ENCODE measurements at regions of chr14 and their contacts with region 1.

Region 1: GRCh38 chr14:20970983-20971704 is 15.9 kb downstream of the RNASE2 start:
- DNase-seq: peak; percentile 86
- ATAC-seq: peak; percentile 94
- H3K4me3 Mint-ChIP-seq: peak overlapping the region; percentile 79
- H3K27ac Mint-ChIP-seq: peak overlapping the region; percentile 48
- H3K4me1 Mint-ChIP-seq: peaks cover 6% of the 10 kb centered on the region
- H3K27me3 Mint-ChIP-seq: peaks cover 28% of the 10 kb centered on the region
- CTCF ChIP-seq: peak; percentile 95

Region 2: DNA sequence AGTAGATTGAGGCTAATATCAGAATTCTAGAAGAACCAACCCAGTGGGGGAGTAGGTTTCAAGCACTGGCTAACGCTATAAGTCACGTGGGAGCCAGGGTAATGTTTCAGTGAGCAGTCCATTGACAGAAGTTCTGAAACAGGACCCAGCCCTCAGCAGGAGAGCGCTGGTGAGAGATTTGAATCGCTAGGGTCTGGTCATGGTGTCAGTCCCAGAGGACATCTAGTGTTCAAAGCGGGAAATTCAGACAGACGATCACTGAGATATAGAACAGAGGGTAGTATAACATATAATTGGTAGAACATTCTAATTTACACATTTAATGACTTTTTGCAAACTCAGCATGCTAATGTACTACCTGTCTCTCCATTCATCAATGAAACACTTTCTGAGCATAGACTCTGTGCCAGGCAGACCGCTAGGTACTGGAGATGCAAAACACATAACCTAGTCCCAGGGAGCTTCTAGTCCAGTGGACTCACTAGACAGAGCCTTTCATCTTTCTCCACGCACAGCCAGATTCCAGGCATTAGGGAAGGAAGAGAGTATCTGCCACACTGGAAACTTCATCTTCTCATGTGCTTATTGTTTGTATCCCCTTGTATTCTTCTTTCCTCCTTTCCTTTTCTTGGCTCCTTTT is 115.4 kb before region 1 on chr14:
- CTCF ChIA-PET with region 1: interaction called, 73 read pairs
- POLR2A ChIA-PET with region 1: no interaction called
- intact Hi-C with region 1: loop called (anchors 1 kb)
- DNase-seq: peak; percentile 50
- ATAC-seq: peak; percentile 87
- H3K4me3 Mint-ChIP-seq: no peak overlapping the region
- H3K27ac Mint-ChIP-seq: no peak overlapping the region
- H3K4me1 Mint-ChIP-seq: no peaks in the 10 kb centered on the region
- H3K27me3 Mint-ChIP-seq: peaks cover 13% of the 10 kb centered on the region
- CTCF ChIP-seq: peak; percentile 68

Region 3: GRCh38 chr14:20934148-20934762 is 36.9 kb before region 1 on chr14:
- CTCF ChIA-PET with region 1: interaction called, 12 read pairs
- POLR2A ChIA-PET with region 1: no interaction called
- intact Hi-C with region 1: no loop called
- DNase-seq: peak; percentile 65
- ATAC-seq: no peak
- H3K4me3 Mint-ChIP-seq: no peak overlapping the region
- H3K27ac Mint-ChIP-seq: no peak overlapping the region
- H3K4me1 Mint-ChIP-seq: no peaks in the 10 kb centered on the region
- H3K27me3 Mint-ChIP-seq: peaks cover 2% of the 10 kb centered on the region
- CTCF ChIP-seq: peak; percentile 76

Region 4: DNA sequence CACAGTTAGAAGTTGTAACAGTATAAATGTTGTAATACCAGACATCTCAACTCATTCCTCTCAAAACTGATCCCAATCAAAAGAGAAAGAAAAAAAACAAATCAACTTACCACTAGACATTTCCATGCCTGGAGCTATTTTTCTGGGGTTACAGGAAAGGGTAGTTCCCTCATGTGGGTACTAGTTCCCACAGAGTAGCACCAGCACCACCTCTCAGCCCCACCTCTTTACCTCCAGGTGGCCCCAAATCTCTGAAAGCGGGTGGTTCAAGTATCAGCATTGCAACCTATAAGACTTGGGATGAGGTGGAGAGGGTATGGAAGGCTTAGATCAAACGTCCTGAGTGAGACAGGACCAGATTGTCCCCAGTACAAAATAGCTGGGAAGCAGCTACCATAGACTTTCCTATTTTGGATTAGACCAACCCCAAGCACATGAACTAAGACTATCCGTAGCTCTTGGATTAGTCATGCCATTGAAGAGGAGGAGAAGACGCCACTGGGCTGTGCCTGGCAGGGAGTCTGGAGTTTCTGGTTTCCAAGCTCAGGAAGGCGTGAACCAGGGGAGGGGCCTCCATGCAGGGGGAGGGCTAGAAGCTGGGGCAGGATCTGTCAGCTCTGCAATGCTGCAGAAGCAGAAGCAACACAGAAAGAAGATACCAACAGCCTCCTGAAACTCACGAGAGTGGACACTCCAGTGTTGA is 27.7 kb after region 1 on chr14 and contains the start of gene SLC39A2:
- CTCF ChIA-PET with region 1: interaction called, 37 read pairs
- POLR2A ChIA-PET with region 1: interaction called, 3 read pairs
- intact Hi-C with region 1: no loop called
- DNase-seq: no peak
- ATAC-seq: no peak
- H3K4me3 Mint-ChIP-seq: no peak within 1 kb of the TSS
- H3K27ac Mint-ChIP-seq: peak within 1 kb of the TSS; percentile 19
- H3K4me1 Mint-ChIP-seq: peaks cover 8% of the 10 kb centered on the region
- H3K27me3 Mint-ChIP-seq: no peaks in the 10 kb centered on the region
- CTCF ChIP-seq: no peak
- total RNA-seq, gene SLC39A2: not detected

Region 5: DNA sequence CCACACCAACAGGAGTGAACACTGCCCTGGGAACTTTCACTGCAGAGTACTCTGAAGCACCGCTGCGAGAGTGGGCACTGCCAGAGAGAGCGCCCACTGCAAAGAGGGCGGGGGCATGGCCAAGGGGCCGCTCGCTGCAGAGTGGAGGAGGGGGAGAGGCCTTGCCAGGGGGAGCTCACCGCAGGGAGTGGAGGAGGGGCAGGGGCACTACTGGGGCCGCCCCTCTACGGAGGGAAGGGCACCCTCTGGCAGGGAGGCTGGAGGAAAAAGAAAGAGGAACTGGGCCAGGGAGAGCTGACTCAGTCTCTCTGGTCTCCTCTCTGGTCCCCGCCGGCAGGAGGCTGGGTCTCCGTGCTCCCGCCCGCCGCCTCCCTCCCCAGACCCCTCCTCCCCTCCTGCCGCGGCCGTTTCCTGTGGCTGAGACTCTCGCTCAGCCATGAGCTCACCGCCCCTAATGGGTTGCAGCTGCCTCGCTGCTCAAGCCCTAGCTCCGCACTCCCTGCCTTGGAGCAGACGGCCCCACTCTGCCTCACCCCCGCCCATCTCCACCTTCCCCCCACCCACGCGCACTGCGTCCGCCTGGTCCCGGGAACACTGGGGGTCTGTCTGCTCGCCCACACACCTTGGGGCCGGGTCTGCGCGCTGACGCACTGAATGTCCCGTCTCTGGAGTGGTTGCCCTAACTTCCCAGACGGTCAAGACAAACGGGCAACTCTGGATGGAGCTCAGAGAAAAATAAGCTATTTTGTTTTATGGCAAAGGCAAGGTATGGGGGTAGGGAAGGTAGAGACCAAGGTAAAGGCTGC is 100.3 kb after region 1 on chr14:
- CTCF ChIA-PET with region 1: interaction called, 10 read pairs
- POLR2A ChIA-PET with region 1: no interaction called
- intact Hi-C with region 1: no loop called
- DNase-seq: peak; percentile 76
- ATAC-seq: peak; percentile 76
- H3K4me3 Mint-ChIP-seq: peak overlapping the region; percentile 69
- H3K27ac Mint-ChIP-seq: no peak overlapping the region
- H3K4me1 Mint-ChIP-seq: peaks cover 31% of the 10 kb centered on the region
- H3K27me3 Mint-ChIP-seq: peaks cover 56% of the 10 kb centered on the region
- CTCF ChIP-seq: no peak

Region 6: DNA sequence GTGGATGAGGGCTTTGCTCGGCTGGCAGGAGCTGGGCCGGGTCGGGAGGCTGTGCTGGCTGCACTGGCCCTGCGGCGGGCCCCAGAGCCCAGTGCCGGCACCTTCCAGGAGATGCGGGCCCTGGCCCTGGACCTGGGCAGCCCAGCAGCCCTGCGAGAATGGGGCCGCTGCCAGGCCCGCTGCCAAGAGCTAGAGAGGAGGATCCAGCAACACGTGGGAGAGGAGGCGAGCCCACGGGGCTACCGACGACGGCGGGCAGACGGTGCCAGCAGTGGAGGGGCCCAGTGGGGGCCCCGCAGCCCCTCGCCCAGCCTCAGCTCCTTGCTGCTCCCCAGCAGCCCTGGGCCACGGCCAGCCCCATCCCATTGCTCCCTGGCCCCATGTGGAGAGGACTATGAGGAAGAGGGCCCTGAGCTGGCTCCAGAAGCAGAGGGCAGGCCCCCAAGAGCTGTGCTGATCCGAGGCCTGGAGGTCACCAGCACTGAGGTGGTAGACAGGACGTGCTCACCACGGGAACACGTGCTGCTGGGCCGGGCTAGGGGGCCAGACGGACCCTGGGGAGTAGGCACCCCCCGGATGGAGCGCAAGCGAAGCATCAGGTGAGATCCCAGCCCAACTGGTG is 110.5 kb after region 1 on chr14:
- CTCF ChIA-PET with region 1: no interaction called
- POLR2A ChIA-PET with region 1: no interaction called
- intact Hi-C with region 1: no loop called
- DNase-seq: no peak
- ATAC-seq: no peak
- H3K4me3 Mint-ChIP-seq: no peak overlapping the region
- H3K27ac Mint-ChIP-seq: no peak overlapping the region
- H3K4me1 Mint-ChIP-seq: peaks cover 3% of the 10 kb centered on the region
- H3K27me3 Mint-ChIP-seq: no peaks in the 10 kb centered on the region
- CTCF ChIP-seq: no peak